K562 (cell line): ENCODE measurements at regions of chr11 and their contacts with region 1.

Region 1: DNA sequence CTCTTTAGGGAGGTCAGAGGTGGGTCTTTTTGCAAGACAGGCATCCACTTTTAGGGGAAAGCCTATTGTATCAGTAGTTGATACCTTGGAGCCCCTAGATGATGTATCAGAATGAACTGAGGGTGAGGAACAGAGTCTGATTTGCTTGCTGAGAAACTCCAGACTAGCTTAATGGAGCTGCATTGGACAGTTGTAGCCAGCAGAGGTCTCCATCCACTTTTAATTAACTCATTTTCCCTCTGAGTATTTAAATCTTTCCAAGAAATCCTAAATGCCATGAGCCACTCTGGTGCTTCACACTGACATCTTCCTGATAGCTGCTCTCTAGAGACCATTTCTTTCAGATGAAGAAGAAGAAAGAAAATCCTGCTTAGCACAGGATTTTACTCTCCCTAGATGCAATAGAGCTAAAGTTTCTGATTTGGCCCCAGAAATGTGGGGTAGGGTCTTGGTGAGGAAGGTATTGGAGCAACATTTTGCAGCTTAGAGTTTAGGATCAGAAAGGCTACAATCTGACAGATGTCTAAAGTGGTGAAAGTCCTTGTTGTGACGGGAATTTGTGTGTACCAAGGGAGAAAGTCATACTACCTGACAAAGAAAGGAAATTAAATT is 38.0 kb downstream of the EXT2 start:
- DNase-seq: peak; percentile 32 to 48 (median 36)
- ATAC-seq: peak; percentile 83
- H3K4me3 ChIP-seq: no peak overlapping the region
- H3K27ac ChIP-seq: no peak overlapping the region
- H3K4me1 ChIP-seq: peaks cover 0 to 2% of the 10 kb centered on the region in 2 experiments; a peak in 1 of 5 replicates
- H3K27me3 ChIP-seq: no peaks in the 10 kb centered on the region
- CTCF ChIP-seq: peak; percentile 43 to 76 (median 72)
- EP300 ChIP-seq: no peak
- POLR2A ChIP-seq: no peak
- RAD21 ChIP-seq: peak; percentile 73 to 81

Region 2: GRCh38 chr11:44095506-44096394 is 37.7 kb before region 1 on chr11 and contains the start of gene EXT2:
- CTCF ChIA-PET with region 1: no interaction called
- POLR2A ChIA-PET with region 1: no interaction called
- in situ Hi-C with region 1: no loop called
- intact Hi-C with region 1: loop called (anchors 2 kb)
- DNase-seq: peak; percentile 91 to 95 (median 95)
- ATAC-seq: peak; percentile 96
- H3K4me3 ChIP-seq: peak within 1 kb of the TSS; percentile 94
- H3K27ac ChIP-seq: peak within 1 kb of the TSS; percentile 58; the same call in 2 of the 3 replicates
- H3K4me1 ChIP-seq: peaks cover 11 to 18% of the 10 kb centered on the region in 2 experiments; a peak in 4 of 5 replicates
- H3K27me3 ChIP-seq: no peaks in the 10 kb centered on the region
- CTCF ChIP-seq: peak; percentile 87 to 90 (median 87)
- EP300 ChIP-seq: no peak
- POLR2A ChIP-seq: peak; percentile 60; the same call in 1 of the 2 replicates
- RAD21 ChIP-seq: peak in 1 of 2 experiments; percentile 23; a peak in 1 of 4 replicates
- polyA plus RNA-seq, gene EXT2: 7.5 to 13.1 TPM

Region 3: GRCh38 chr11:44256673-44257291 is 123.3 kb after region 1 on chr11:
- CTCF ChIA-PET with region 1: interaction called, 3 read pairs
- POLR2A ChIA-PET with region 1: no interaction called
- in situ Hi-C with region 1: no loop called
- intact Hi-C with region 1: loop called (anchors 5 kb)
- DNase-seq: peak in 2 of 4 experiments; percentile 38 to 60
- ATAC-seq: peak; percentile 45
- H3K4me3 ChIP-seq: no peak overlapping the region
- H3K27ac ChIP-seq: no peak overlapping the region
- H3K4me1 ChIP-seq: peaks cover 1 to 18% of the 10 kb centered on the region in 2 experiments
- H3K27me3 ChIP-seq: no peaks in the 10 kb centered on the region
- CTCF ChIP-seq: no peak
- EP300 ChIP-seq: no peak
- POLR2A ChIP-seq: no peak
- RAD21 ChIP-seq: no peak

Region 4: DNA sequence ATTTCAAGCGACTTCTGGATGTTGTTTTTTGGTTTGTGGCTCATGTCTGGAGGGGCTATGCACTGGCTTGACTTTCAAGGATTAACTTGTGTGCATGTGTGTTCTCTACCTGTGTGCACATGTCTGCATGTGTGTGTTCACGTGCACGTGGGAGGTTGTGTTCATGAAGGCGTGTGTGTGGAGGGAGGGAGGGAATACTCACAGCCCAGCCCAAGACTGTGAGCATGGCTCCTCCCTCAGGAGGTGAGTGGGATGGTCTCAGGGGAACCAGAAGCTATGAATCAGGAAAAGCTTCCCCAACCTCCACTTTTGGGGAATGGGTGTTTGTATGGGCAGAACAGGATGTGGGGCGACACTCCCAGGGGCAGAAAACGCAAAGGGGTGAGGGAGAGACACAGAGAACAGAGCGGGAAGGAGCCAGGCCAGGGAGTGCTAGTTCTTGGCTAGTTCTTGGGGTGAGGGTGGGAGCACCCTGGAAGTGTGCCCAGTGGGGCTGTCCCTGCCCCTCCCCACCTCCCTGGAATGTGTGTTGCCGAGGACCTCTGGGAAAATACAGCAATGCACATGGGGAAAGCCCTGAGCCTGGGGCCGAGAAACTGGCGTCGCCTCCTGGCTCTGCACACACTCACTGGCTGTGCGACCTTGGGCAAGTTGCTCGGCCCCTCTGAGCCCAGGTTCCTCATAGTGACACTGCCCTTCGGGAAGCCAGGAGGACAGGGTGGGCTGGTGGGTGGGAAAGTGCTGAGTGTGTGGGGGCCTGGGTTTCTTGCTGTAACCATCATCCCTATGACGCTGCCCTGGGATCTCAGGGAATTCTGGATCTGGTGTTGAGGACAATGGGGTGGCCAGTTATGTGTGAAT is 193.4 kb after region 1 on chr11:
- CTCF ChIA-PET with region 1: interaction called, 12 read pairs
- POLR2A ChIA-PET with region 1: no interaction called
- in situ Hi-C with region 1: no loop called
- intact Hi-C with region 1: loop called (anchors 2 kb)
- DNase-seq: peak; percentile 59 to 76 (median 70)
- ATAC-seq: peak; percentile 89
- H3K4me3 ChIP-seq: no peak overlapping the region
- H3K27ac ChIP-seq: no peak overlapping the region; the same call in 2 of the 3 replicates
- H3K4me1 ChIP-seq: peaks cover 9 to 26% of the 10 kb centered on the region in 2 experiments
- H3K27me3 ChIP-seq: no peaks in the 10 kb centered on the region; a peak in 1 of 5 replicates
- CTCF ChIP-seq: peak; percentile 48 to 74 (median 59); a peak in 3 of 6 replicates
- EP300 ChIP-seq: no peak
- POLR2A ChIP-seq: no peak
- RAD21 ChIP-seq: peak; percentile 77 to 83

Region 5: GRCh38 chr11:44538375-44539054 is 405.1 kb after region 1 on chr11:
- CTCF ChIA-PET with region 1: interaction called, 12 read pairs
- POLR2A ChIA-PET with region 1: no interaction called
- in situ Hi-C with region 1: loop called (anchors 10 kb)
- intact Hi-C with region 1: loop called (anchors 2 kb)
- DNase-seq: peak; percentile 85 to 88 (median 87)
- ATAC-seq: peak; percentile 95
- H3K4me3 ChIP-seq: no peak overlapping the region
- H3K27ac ChIP-seq: no peak overlapping the region
- H3K4me1 ChIP-seq: peaks cover 16 to 29% of the 10 kb centered on the region in 2 experiments
- H3K27me3 ChIP-seq: no peaks in the 10 kb centered on the region
- CTCF ChIP-seq: peak; percentile 92 to 95 (median 95)
- EP300 ChIP-seq: no peak
- POLR2A ChIP-seq: no peak
- RAD21 ChIP-seq: peak; percentile 99

Region 6: GRCh38 chr11:44611687-44612434 is 478.4 kb after region 1 on chr11:
- CTCF ChIA-PET with region 1: interaction called, 6 read pairs
- POLR2A ChIA-PET with region 1: no interaction called
- in situ Hi-C with region 1: no loop called
- intact Hi-C with region 1: loop called (anchors 10 kb)
- DNase-seq: no peak
- ATAC-seq: no peak
- H3K4me3 ChIP-seq: no peak overlapping the region
- H3K27ac ChIP-seq: no peak overlapping the region
- H3K4me1 ChIP-seq: peaks cover 27 to 32% of the 10 kb centered on the region in 2 experiments; a peak in 4 of 5 replicates
- H3K27me3 ChIP-seq: no peaks in the 10 kb centered on the region
- CTCF ChIP-seq: no peak
- EP300 ChIP-seq: no peak
- POLR2A ChIP-seq: no peak
- RAD21 ChIP-seq: no peak